CD8-positive, alpha-beta T cell (primary cell): ENCODE measurements at regions of chr16 and their contacts with region 1.

Region 1: DNA sequence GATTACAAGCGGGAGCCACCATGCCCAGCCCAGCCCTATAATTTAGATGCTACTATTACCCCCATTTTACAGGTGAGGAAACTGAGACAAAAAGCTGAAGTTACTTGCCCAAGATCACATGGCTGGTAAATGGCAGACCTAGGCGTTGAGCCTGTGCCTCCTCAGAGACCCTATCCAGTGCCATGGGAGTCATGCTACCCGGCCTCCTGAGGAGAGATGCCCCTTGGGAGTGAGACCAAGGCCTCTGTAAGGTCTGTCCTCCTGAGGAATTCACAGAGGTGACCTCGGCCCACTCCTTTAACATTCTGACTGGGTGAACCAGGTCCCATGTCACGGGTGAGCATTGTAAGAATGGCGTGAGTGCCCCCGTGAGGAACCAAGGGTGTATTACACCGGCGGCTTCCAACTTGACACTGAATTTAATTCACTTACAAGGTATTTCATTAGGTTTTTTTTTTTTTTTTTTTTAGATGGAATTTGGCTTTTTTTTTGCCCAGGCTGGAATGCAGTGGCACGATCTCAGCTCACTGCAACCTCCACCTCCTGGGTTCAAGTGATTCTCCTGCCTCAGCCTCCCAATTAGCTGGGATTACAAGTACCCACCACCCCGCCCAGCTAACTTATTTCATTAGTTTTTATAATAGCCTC is 95.7 kb downstream of the ABCC6 start:
- DNase-seq: peak; percentile 47 to 80 (median 66)
- ATAC-seq: peak; percentile 92
- H3K4me3 ChIP-seq: no peak overlapping the region
- H3K4me3 Mint-ChIP-seq: no peak overlapping the region
- H3K27ac ChIP-seq: no peak overlapping the region
- H3K27ac Mint-ChIP-seq: no peak overlapping the region
- H3K4me1 ChIP-seq: no peaks in the 10 kb centered on the region
- H3K4me1 Mint-ChIP-seq: peaks cover 1% of the 10 kb centered on the region
- H3K27me3 ChIP-seq: no peaks in the 10 kb centered on the region
- H3K27me3 Mint-ChIP-seq: no peaks in the 10 kb centered on the region
- CTCF ChIP-seq: peak; percentile 79

Region 2: DNA sequence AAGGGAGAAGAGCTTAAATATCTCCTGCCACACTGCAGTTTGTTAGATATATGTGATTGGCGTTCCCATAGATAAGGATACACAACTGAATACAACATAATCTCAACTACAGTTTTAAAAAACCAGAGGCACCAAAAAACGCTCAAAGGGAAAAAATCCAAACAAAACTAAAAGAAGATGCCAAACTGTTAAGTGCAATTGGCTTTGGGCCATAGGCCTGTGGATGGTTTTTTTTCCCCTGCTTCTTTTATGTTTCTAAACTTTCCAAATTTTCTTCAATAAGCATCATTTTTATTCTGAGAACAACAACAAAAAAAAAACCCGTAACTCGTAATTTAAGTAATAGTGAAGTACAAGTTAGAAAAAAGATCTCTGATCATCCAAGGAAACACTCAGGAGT is 506.8 kb before region 1 on chr16:
- CTCF ChIA-PET with region 1: no interaction called
- POLR2A ChIA-PET with region 1: no interaction called
- intact Hi-C with region 1: loop called in 1 of 2 experiments (anchors 10 kb)
- DNase-seq: no peak
- ATAC-seq: no peak
- H3K4me3 ChIP-seq: no peak overlapping the region
- H3K4me3 Mint-ChIP-seq: no peak overlapping the region
- H3K27ac ChIP-seq: no peak overlapping the region
- H3K27ac Mint-ChIP-seq: no peak overlapping the region
- H3K4me1 ChIP-seq: no peaks in the 10 kb centered on the region
- H3K4me1 Mint-ChIP-seq: no peaks in the 10 kb centered on the region
- H3K27me3 ChIP-seq: no peaks in the 10 kb centered on the region
- H3K27me3 Mint-ChIP-seq: no peaks in the 10 kb centered on the region
- CTCF ChIP-seq: no peak

Region 3: GRCh38 chr16:15765880-15766279 is 361.7 kb before region 1 on chr16:
- CTCF ChIA-PET with region 1: interaction called, 8 read pairs
- POLR2A ChIA-PET with region 1: no interaction called
- intact Hi-C with region 1: loop called in 1 of 2 experiments (anchors 1 kb)
- DNase-seq: peak in 4 of 9 experiments; percentile 9 to 60 (median 32)
- ATAC-seq: peak; percentile 40
- H3K4me3 ChIP-seq: no peak overlapping the region
- H3K4me3 Mint-ChIP-seq: no peak overlapping the region
- H3K27ac ChIP-seq: no peak overlapping the region
- H3K27ac Mint-ChIP-seq: no peak overlapping the region
- H3K4me1 ChIP-seq: no peaks in the 10 kb centered on the region
- H3K4me1 Mint-ChIP-seq: no peaks in the 10 kb centered on the region
- H3K27me3 ChIP-seq: no peaks in the 10 kb centered on the region
- H3K27me3 Mint-ChIP-seq: peaks cover 35% of the 10 kb centered on the region
- CTCF ChIP-seq: peak; percentile 34

Region 4: DNA sequence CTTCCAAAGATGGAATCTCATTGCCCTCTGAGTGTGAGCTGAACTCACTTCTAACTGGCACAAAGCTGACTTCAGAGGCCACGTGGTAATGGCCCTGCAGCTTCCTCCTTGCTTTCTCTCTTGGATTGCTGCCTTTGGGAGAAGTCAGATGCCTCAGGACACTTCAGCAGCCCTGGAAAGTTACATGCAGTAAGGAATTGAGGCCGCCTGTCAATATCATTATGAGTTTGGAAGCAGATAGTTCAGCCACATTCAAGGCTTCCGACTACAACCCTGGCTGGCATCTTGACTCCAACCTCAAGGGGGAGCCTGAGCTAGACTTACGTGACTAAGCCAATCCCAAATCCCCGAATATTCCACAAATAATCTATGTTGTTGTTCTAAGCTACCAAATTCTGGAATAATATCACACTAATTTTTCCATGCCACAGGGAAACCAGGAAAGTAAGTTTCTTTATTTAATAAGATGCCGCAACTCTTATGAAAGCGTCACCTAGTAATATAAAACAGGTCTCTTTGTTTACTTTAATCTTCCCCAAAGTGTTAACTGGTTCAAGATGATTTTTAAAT is 252.8 kb before region 1 on chr16:
- CTCF ChIA-PET with region 1: interaction called, 8 read pairs
- POLR2A ChIA-PET with region 1: no interaction called
- intact Hi-C with region 1: loop called in 1 of 2 experiments (anchors 1 kb)
- DNase-seq: peak in 3 of 9 experiments; percentile 10 to 38 (median 25)
- ATAC-seq: no peak
- H3K4me3 ChIP-seq: no peak overlapping the region
- H3K4me3 Mint-ChIP-seq: no peak overlapping the region
- H3K27ac ChIP-seq: no peak overlapping the region
- H3K27ac Mint-ChIP-seq: no peak overlapping the region
- H3K4me1 ChIP-seq: no peaks in the 10 kb centered on the region
- H3K4me1 Mint-ChIP-seq: peaks cover 2% of the 10 kb centered on the region
- H3K27me3 ChIP-seq: no peaks in the 10 kb centered on the region
- H3K27me3 Mint-ChIP-seq: no peaks in the 10 kb centered on the region
- CTCF ChIP-seq: peak; percentile 32

Region 5: DNA sequence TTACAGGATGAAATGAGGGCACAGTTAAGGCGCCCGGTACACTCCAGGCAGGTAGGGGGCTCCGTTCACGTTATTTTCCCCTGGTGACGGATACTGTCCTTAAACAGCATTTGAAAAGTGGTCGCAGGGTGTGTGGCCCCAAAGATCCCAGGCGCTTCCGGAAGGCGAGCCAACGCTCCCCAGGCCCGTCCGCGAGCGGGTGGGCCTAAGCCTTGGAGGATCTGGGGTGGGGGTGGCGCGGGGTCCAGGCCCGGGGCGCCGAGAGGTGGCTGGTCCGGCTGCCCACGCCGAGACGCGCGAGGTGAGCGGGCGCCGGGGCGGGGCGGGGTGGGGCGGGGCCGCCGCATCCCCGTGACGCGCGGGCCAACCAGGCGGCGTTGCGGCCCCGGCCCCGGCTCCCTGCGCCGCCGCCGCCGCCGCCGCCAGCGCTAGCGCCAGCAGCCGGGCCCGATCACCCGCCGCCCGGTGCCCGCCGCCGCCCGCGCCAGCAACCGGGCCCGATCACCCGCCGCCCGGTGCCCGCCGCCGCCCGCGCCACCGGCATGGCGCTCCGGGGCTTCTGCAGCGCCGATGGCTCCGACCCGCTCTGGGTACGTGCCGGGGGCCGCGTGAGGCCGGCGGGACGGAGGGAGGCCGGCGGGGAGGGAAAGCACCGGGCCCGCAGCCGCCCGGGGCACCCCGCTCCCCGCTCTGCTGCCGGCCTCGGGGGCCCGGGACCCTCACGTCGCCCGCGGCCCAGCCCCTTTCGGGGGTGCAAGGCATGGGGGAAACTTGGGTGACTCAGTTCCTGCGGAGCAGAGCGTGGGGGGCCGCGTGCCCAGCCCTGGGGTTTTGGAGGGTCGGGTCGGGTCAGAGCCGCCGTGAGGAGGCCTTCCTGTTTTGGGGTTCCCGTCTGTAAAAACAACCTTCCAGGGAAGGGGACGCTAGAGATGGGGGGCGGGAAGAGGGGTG is 178.1 kb before region 1 on chr16 and contains the start of gene ABCC1:
- CTCF ChIA-PET with region 1: no interaction called
- POLR2A ChIA-PET with region 1: no interaction called
- intact Hi-C with region 1: loop called (anchors 1 kb)
- DNase-seq: peak; percentile 16 to 86 (median 72)
- ATAC-seq: peak; percentile 70
- H3K4me3 ChIP-seq: peak within 1 kb of the TSS; percentile 73 to 78
- H3K4me3 Mint-ChIP-seq: peak within 1 kb of the TSS; percentile 95
- H3K27ac ChIP-seq: peak within 1 kb of the TSS; percentile 75 to 77
- H3K27ac Mint-ChIP-seq: peak within 1 kb of the TSS; percentile 96
- H3K4me1 ChIP-seq: peaks cover 27% of the 10 kb centered on the region
- H3K4me1 Mint-ChIP-seq: peaks cover 34% of the 10 kb centered on the region
- H3K27me3 ChIP-seq: no peaks in the 10 kb centered on the region
- H3K27me3 Mint-ChIP-seq: no peaks in the 10 kb centered on the region
- CTCF ChIP-seq: peak; percentile 28
- total RNA-seq, gene ABCC1: 41.1 to 41.2 TPM